ENCODE measurements at regions of chr1 and their contacts with region 1.

Region 1: DNA sequence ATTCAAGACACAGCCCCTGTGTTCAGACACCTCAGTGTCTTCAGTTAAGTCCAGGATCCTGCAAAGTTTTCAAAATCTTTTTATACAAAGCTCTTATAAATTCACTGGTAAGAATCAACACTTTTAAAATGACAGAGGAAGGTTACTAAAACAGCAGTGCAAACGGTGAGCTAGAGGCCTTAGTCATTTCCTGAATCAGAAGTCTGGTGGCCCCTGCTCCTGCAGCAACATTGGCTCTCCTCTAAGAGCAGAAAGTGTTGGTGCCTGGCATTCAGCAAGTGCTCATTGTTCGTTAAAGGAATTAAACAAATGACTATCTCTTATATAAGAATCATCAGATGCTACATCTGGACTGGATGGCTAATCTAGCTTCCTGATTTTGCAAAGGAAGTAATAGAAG is 282.9 kb downstream of the PTGER3 start:
- DNase-seq: no peak
- ATAC-seq: no peak
- H3K4me3 ChIP-seq: no peak overlapping the region
- H3K27ac ChIP-seq: no peak overlapping the region
- H3K4me1 ChIP-seq: no peaks in the 10 kb centered on the region
- H3K27me3 ChIP-seq: peaks cover 6% of the 10 kb centered on the region
- CTCF ChIP-seq: no peak
- POLR2A ChIP-seq: no peak
- RAD21 ChIP-seq: no peak

Region 2: GRCh38 chr1:70790237-70790923 is 25.6 kb after region 1 on chr1:
- CTCF ChIA-PET with region 1: no interaction called
- POLR2A ChIA-PET with region 1: no interaction called
- RAD21 ChIA-PET with region 1: no interaction called
- intact Hi-C with region 1: loop called (anchors 1 kb)
- DNase-seq: no peak
- ATAC-seq: no peak
- H3K4me3 ChIP-seq: no peak overlapping the region
- H3K27ac ChIP-seq: no peak overlapping the region
- H3K4me1 ChIP-seq: no peaks in the 10 kb centered on the region
- H3K27me3 ChIP-seq: peaks cover 17% of the 10 kb centered on the region
- CTCF ChIP-seq: no peak
- POLR2A ChIP-seq: no peak
- RAD21 ChIP-seq: no peak

Region 3: GRCh38 chr1:70856201-70856600 is 91.5 kb after region 1 on chr1:
- CTCF ChIA-PET with region 1: no interaction called
- POLR2A ChIA-PET with region 1: no interaction called
- RAD21 ChIA-PET with region 1: no interaction called
- intact Hi-C with region 1: no loop called
- DNase-seq: no peak
- ATAC-seq: no peak
- H3K4me3 ChIP-seq: no peak overlapping the region
- H3K27ac ChIP-seq: no peak overlapping the region
- H3K4me1 ChIP-seq: no peaks in the 10 kb centered on the region
- H3K27me3 ChIP-seq: no peaks in the 10 kb centered on the region; the same call in 1 of the 2 replicates
- CTCF ChIP-seq: no peak
- POLR2A ChIP-seq: no peak
- RAD21 ChIP-seq: no peak

Region 4: GRCh38 chr1:72623299-72623708 is 1858.6 kb after region 1 on chr1:
- CTCF ChIA-PET with region 1: no interaction called
- POLR2A ChIA-PET with region 1: no interaction called
- RAD21 ChIA-PET with region 1: no interaction called
- intact Hi-C with region 1: no loop called
- DNase-seq: no peak
- ATAC-seq: no peak
- H3K4me3 ChIP-seq: no peak overlapping the region
- H3K27ac ChIP-seq: no peak overlapping the region
- H3K4me1 ChIP-seq: no peaks in the 10 kb centered on the region
- H3K27me3 ChIP-seq: no peaks in the 10 kb centered on the region
- CTCF ChIP-seq: peak in 2 of 3 experiments; percentile 7 to 22; a peak in 1 of 6 replicates
- POLR2A ChIP-seq: no peak
- RAD21 ChIP-seq: no peak

Measured in HCT116 (cell line).